Transverse colon (tissue), 4 donors: ENCODE measurements at regions of chr16 and their contacts with region 1.

Region 1: DNA sequence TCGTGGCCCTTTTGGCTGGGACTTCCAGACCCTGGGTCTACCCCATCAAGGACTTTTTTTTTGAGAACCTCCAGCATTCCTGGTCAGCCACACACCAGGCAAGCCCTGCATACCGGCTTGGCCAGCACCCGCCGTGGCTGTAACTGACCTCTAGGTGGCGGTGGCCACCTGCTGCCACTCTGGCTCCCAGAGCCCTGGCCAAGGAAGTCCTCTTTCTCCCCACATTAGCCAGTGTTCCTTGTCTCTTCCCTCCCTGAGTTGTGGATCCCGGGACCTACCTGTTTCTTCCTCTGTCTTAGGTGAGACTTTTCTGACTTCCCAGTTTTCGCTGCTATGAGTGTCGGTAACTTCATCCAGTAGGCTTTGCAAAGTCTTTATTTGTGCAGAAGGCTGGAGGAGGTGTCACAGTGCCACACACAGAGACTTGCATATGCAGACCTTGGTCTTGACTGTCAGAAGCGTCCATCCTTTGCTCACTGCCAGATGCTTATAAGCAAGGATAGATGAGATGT is 348.3 kb downstream of the CPPED1 start:
- DNase-seq: peak; percentile 59
- H3K4me3 ChIP-seq: no peak overlapping the region
- H3K27ac ChIP-seq: no peak overlapping the region
- H3K4me1 ChIP-seq: no peaks in the 10 kb centered on the region
- H3K27me3 ChIP-seq: no peaks in the 10 kb centered on the region
- CTCF ChIP-seq: peak; percentile 74 to 88 (median 84)
- EP300 ChIP-seq: no peak
- POLR2A ChIP-seq: no peak

Region 2: DNA sequence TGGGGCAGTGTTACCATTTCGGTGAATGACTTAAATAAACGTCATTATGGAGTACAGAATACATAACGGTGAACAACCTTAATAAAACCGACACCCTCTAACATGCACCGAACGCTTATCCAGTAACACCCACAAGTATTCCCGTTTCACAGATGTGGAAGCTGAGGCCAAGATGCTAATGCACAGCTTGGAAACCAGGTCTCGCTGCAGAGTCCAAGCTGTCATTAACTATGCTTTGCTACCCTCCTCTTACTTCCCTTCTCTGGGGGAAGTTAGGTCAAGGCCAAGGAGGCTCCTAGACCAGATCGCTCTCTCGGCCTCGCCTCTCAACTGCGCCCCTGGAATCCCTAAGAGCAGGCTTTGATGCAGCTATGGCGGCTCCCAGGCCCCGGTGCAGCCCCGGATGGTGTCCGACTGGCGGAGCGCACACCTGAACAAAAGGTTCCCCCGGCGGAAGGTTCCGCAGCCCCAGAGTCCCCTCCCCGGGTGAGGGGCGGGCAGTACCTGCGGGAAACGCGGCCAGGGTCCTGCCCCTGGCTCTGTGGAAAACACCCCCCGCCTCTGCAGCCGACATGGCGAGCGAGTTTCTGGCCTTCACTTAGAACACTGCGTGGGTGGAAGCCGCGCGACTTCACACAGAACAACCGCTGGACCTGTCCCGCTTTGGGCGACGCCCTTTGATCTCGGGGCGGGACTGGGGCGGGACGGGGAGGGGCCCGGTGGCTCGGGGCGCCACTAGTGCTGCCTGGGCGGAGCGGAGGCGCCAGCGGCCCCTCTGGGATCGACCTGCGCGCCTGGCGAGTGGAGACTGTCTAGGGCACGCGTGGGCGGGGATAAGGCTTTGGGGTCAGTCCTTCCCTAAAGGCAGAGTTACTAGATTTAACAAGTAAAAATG is 348.1 kb after region 1 on chr16 and contains the start of gene CPPED1:
- in situ Hi-C with region 1: loop called in 3 of 4 experiments (anchors 25 kb)
- intact Hi-C with region 1: no loop called
- DNase-seq: peak; percentile 94
- H3K4me3 ChIP-seq: peak within 1 kb of the TSS; percentile 52 to 84 (median 56)
- H3K27ac ChIP-seq: peak within 1 kb of the TSS; percentile 84 to 93 (median 89)
- H3K4me1 ChIP-seq: peaks cover 0 to 29% (median 20%) of the 10 kb centered on the region in 4 donors
- H3K27me3 ChIP-seq: no peaks in the 10 kb centered on the region
- CTCF ChIP-seq: no peak
- EP300 ChIP-seq: no peak
- POLR2A ChIP-seq: peak; percentile 60
- total RNA-seq, gene CPPED1: 4.1 to 17.3 (median 12.7) TPM

Region 3: DNA sequence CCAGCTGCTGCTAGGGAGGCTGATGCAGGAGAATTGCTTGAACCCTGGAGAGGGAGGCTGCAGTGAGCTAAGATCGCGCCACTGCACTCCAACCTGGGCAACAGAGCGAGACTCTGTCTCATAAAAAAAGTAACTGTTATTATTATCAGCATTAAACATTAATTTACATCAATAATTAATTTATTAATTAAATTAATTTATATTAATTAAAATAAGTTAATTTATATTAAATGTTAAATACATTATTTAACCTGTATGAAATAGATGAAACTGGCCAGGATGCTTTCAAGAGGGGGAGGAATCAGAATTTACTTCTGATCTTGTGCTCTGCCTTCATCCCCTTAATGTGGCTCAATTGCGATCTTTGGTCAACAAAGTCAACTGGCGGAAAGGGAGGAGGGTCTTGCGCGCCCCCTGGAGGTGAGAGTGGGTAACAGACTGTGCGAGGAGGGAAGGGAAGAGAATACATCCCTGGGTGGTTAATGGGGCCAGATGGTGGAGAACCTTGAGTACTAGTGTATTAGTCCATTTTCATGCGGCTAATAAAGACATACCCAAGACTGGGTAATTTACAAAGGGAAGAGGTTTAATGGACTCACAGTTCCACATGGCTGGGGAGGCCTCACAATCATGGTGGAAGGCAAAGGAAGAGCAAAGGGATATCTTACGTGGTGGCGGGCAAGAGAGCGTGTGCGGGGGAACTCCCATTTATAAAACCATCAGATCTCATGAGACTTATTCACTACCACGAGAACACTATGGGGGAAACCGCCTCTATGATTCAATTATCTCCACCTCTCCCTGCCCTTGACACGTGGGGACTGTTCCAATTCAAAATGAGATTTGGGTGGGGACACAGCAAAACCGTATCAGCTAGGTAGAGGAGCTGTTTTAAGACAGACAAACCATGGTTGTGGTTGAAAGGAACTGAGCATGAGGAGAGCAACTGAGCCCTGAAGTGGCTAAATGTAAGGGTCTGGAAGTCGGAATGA is 364.1 kb after region 1 on chr16:
- in situ Hi-C with region 1: loop called (anchors 10 to 25 kb)
- intact Hi-C with region 1: no loop called
- DNase-seq: peak; percentile 73
- H3K4me3 ChIP-seq: no peak overlapping the region
- H3K27ac ChIP-seq: no peak overlapping the region
- H3K4me1 ChIP-seq: no peaks in the 10 kb centered on the region
- H3K27me3 ChIP-seq: no peaks in the 10 kb centered on the region
- CTCF ChIP-seq: peak; percentile 81 to 85 (median 83)
- EP300 ChIP-seq: no peak
- POLR2A ChIP-seq: no peak

Region 4: GRCh38 chr16:14211856-14212543 is 1756.7 kb after region 1 on chr16:
- in situ Hi-C with region 1: no loop called
- intact Hi-C with region 1: loop called (anchors 5 kb)
- DNase-seq: no peak
- H3K4me3 ChIP-seq: no peak overlapping the region
- H3K27ac ChIP-seq: no peak overlapping the region
- H3K4me1 ChIP-seq: no peaks in the 10 kb centered on the region
- H3K27me3 ChIP-seq: no peaks in the 10 kb centered on the region
- CTCF ChIP-seq: no peak
- EP300 ChIP-seq: no peak
- POLR2A ChIP-seq: no peak